Calu3 (cell line): ENCODE measurements at regions of chr16 and their contacts with region 1.

Region 1: DNA sequence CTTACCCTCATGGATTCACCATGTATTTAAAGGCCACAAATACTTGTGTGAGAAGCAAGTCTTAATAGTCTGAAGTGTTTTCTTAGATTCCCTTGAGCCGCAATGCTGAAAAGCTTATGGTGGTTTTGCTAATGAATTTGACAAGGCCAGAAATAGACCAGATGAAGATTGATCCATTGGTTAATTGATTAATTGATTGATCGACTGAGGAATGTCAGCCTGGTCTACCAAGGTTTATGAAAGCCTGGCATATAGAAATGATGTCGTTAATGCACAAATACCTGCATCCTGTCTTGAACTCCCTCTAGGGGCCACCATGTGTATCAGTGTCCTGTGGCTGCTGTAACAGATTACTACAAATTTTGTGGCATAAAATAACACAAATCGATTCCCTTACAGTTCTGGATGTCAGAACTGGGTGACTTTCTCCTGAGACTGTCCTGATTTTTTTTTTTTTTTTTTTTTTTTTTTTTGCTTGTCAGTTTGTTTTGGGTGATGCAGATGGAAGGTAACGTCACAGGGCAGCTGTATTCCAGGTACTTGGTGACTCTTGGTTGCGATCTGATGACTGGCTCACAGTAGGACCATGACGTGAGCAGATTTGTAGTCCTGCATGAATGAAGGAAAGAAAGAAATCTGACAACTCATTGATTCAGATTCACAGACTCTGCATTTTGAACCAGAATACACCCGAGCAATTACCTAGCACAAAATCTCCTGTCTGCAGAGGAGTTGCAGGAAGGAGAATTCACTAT is 553.1 kb downstream of the MAF start:
- DNase-seq: peak; percentile 22
- H3K4me3 Mint-ChIP-seq: no peak overlapping the region
- H3K27ac Mint-ChIP-seq: no peak overlapping the region
- H3K4me1 Mint-ChIP-seq: no peaks in the 10 kb centered on the region
- H3K27me3 Mint-ChIP-seq: no peaks in the 10 kb centered on the region
- CTCF ChIP-seq: peak; percentile 27

Region 2: DNA sequence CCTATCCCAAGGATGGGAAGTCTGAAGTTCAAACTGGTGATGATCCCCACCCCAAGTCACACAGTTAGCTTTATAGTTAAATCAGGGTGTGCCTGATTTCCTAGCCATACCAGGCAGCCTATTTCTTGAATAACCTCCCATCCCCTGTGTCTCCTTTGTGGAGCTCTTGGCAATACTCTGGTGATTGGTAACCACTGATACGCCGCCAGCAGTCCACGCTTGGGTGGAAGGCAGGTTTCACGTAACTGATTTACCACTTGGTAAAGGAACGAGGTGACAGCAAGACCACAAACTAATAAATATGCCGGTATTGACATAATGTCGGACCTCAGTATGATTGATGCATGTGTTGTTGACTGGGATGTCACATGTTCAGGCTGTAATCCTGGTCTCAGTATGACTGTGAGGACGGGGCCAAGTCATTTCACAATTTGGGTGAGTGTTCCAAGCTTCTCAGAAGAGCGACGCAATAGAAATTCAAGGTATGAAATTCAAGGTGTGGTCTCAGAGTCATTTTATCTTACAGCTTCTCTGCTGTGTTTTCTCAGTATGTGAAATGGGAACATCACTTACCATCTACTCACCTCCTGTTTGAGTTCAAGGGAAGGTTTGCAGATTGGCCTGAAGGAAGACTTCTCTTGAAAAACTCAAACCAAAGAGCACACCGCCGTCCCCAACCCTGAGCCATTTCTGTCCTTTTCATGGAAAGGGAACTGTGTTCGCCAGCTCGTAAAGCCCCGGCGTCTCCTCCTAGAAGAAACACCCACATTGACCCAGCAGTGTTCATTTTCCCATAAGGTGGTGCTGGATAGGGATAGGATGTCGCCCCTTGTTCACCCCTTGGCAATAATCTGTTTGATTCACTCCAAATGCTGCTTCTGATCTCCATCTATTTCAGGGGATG is 269.1 kb before region 1 on chr16:
- CTCF ChIA-PET with region 1: no interaction called
- intact Hi-C with region 1: no loop called
- DNase-seq: no peak
- H3K4me3 Mint-ChIP-seq: no peak overlapping the region
- H3K27ac Mint-ChIP-seq: no peak overlapping the region
- H3K4me1 Mint-ChIP-seq: no peaks in the 10 kb centered on the region
- H3K27me3 Mint-ChIP-seq: no peaks in the 10 kb centered on the region
- CTCF ChIP-seq: no peak

Region 3: GRCh38 chr16:78925083-78925767 is 122.2 kb before region 1 on chr16:
- CTCF ChIA-PET with region 1: no interaction called
- intact Hi-C with region 1: loop called (anchors 2 kb)
- DNase-seq: peak; percentile 39
- H3K4me3 Mint-ChIP-seq: no peak overlapping the region
- H3K27ac Mint-ChIP-seq: no peak overlapping the region
- H3K4me1 Mint-ChIP-seq: no peaks in the 10 kb centered on the region
- H3K27me3 Mint-ChIP-seq: no peaks in the 10 kb centered on the region
- CTCF ChIP-seq: peak; percentile 13

Region 4: GRCh38 chr16:78972986-78973385 is 74.4 kb before region 1 on chr16:
- CTCF ChIA-PET with region 1: no interaction called
- intact Hi-C with region 1: no loop called
- DNase-seq: no peak
- H3K4me3 Mint-ChIP-seq: no peak overlapping the region
- H3K27ac Mint-ChIP-seq: no peak overlapping the region
- H3K4me1 Mint-ChIP-seq: no peaks in the 10 kb centered on the region
- H3K27me3 Mint-ChIP-seq: no peaks in the 10 kb centered on the region
- CTCF ChIP-seq: no peak

Region 5: GRCh38 chr16:79036541-79036940 is 10.9 kb before region 1 on chr16:
- CTCF ChIA-PET with region 1: no interaction called
- intact Hi-C with region 1: no loop called
- DNase-seq: no peak
- H3K4me3 Mint-ChIP-seq: no peak overlapping the region
- H3K27ac Mint-ChIP-seq: no peak overlapping the region
- H3K4me1 Mint-ChIP-seq: no peaks in the 10 kb centered on the region
- H3K27me3 Mint-ChIP-seq: no peaks in the 10 kb centered on the region
- CTCF ChIP-seq: no peak